ENCODE measurements at regions of chr11 and their contacts with region 1.

Region 1: DNA sequence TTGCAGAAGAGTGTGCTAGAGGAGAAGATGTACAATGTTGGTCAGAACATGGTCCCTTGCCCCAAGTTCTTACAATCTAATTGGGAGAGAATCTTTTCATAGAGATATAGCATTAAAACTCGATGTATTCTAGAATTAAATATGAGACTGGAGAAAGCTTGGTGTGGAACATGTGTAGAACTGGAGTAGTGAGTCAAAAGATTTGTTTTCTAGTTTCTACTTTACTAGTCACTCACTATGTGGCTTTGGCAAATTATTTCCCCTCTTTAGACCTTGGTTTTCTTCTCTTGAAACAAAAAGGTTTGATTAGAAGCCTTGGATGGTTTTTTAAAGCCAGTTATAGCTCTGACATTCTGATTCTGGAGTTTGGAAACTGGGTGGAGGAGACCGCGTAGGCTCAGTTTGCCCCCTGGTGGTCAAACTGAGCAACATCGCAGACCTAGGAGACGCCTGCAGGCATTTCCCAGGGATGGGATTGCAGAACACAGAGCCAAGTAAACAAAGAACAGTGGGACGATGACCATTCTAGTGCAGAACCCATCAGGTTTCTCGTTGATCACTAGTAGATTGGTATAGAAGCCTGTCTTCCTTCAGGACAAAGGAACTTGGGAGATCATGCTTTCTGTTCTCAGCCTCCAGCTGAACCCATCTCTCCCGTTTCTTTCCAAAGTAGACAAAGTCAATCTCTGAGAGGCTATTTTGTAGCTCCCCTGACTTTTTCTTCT is 8.5 kb upstream of the CHRDL2 start:
- DNase-seq: peak in 1 of 2 donors; percentile 79
- ATAC-seq: peak; percentile 74 to 92 (median 84)
- H3K4me3 ChIP-seq: no peak overlapping the region
- H3K4me3 Mint-ChIP-seq: no peak overlapping the region
- H3K27ac ChIP-seq: no peak overlapping the region
- H3K27ac Mint-ChIP-seq: no peak overlapping the region
- H3K4me1 ChIP-seq: no peaks in the 10 kb centered on the region
- H3K4me1 Mint-ChIP-seq: peaks cover 0 to 5% of the 10 kb centered on the region in 2 donors
- H3K27me3 ChIP-seq: no peaks in the 10 kb centered on the region
- H3K27me3 Mint-ChIP-seq: peaks cover 26 to 27% of the 10 kb centered on the region in 2 donors
- CTCF ChIP-seq: peak; percentile 91

Region 2: GRCh38 chr11:74492974-74493790 is 246.5 kb before region 1 on chr11 and contains the start of gene LIPT2:
- intact Hi-C with region 1: no loop called
- DNase-seq: peak; percentile 94 to 99
- ATAC-seq: peak; percentile 95 to 99 (median 95)
- H3K4me3 ChIP-seq: peak within 1 kb of the TSS; percentile 44
- H3K4me3 Mint-ChIP-seq: peak within 1 kb of the TSS; percentile 83
- H3K27ac ChIP-seq: peak within 1 kb of the TSS; percentile 60
- H3K27ac Mint-ChIP-seq: peak within 1 kb of the TSS; percentile 76 to 84
- H3K4me1 ChIP-seq: peaks cover 14% of the 10 kb centered on the region
- H3K4me1 Mint-ChIP-seq: peaks cover 17% of the 10 kb centered on the region in 2 donors
- H3K27me3 ChIP-seq: no peaks in the 10 kb centered on the region
- H3K27me3 Mint-ChIP-seq: no peaks in the 10 kb centered on the region
- CTCF ChIP-seq: no peak
- total RNA-seq, gene LIPT2: 0.99 to 4.1 (median 3.1) TPM

Region 3: GRCh38 chr11:74702383-74703007 is 37.2 kb before region 1 on chr11:
- intact Hi-C with region 1: loop called (anchors 1 kb)
- DNase-seq: peak; percentile 36 to 75
- ATAC-seq: peak; percentile 75 to 91 (median 83)
- H3K4me3 ChIP-seq: no peak overlapping the region
- H3K4me3 Mint-ChIP-seq: no peak overlapping the region
- H3K27ac ChIP-seq: no peak overlapping the region
- H3K27ac Mint-ChIP-seq: no peak overlapping the region
- H3K4me1 ChIP-seq: no peaks in the 10 kb centered on the region
- H3K4me1 Mint-ChIP-seq: no peaks in the 10 kb centered on the region
- H3K27me3 ChIP-seq: no peaks in the 10 kb centered on the region
- H3K27me3 Mint-ChIP-seq: peaks cover 0 to under 1% of the 10 kb centered on the region in 2 donors
- CTCF ChIP-seq: peak; percentile 83

Measured in natural killer cell (primary cell).